Panc1 (cell line): ENCODE measurements at regions of chr17 and their contacts with region 1.

Region 1: DNA sequence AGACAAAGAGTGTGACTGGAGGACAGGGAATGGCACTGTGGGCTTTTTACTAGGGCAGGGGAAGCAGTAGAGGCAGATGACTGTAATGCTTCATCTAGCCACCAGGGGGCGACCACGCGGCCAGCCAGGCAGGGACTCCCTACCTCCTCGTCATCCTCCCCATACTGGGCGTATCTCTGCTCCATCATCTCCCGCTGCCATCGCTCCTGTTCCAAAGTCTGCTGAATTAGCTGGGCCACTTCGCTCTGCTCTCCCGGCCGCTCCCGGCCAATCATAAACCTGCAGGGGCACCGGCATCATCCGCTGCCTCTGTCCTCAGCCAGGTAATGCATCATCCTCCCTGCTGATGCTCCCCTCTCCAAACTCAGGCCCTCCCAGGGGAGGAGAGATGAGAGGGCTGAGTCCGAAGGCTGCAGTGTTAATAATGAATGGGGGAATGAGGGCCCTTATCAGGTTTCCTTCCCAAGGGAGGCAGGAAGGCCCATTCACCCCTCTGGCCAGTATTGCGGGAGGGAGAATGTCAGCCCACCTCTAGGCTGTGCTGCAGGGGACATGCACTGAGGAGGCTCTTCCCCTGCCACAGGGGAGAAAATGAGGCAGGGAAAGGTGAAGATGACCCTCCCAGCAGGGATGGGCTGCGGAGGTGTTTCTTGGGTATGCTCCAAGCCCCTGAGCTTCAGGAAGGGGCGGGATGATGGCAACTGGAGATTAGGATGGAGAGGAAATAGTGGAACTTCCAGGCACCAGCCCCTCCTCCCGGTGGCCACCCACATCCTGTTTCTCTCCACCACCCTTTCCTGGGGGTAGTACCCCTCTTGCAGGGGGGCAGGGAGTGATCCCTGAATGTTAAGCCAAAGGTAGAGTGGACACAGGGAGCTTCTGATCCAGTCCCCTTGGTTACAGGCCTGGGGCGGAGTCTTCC is 10.3 kb upstream of the SAMD14 start:
- DNase-seq: no peak
- ATAC-seq: peak; percentile 89
- H3K4me3 ChIP-seq: no peak overlapping the region
- H3K27ac ChIP-seq: no peak overlapping the region; the same call in 1 of the 2 replicates
- H3K4me1 ChIP-seq: peaks cover 6% of the 10 kb centered on the region; the same call in 1 of the 2 replicates
- H3K27me3 ChIP-seq: no peaks in the 10 kb centered on the region
- CTCF ChIP-seq: peak; percentile 98

Region 2: DNA sequence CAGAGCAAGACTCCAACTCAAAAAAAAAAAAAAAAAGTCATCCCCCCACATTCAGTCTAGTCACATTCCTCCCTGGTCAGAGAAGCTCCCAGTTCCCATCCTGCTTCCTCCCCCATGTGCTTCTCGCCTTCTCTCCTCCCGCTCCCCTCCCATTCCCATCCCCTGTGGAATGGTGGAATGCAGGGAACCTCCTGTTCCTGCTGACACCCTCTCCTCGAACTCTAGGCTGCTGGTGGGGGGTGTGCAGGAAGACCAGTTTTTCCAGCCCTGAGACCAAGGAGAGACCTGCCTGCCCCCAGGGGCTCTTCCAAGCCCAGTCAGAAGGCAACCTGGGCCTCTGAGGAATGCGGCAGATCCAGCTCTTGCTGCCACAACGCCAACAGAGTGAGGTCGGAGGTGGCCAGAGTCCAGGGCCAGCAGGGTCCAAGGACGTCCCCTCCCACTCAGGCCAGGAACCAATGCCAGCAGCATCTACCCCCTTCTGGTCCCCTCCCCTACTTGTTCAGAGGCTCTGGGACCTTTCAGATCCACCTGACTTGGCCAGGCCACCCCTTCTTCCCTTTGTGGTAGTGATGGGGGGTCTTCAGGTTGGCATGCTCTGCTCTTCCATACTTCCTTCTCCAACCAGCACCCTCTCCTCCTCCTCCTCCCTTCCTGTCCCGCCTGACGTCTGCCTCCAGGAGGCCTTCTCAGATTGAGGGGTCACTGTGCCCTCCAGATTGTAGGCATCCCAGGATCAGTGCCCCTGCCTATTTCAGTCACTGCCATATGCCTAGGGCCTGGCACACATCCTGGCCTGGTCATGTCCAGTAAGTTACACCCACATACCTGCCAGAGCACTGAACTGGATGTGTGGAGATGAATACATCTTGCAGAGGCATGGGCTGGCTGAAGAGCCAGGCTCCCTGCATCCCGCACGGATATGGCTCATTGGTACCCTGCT is 252.9 kb before region 1 on chr17:
- CTCF ChIA-PET with region 1: no interaction called
- POLR2A ChIA-PET with region 1: no interaction called
- in situ Hi-C with region 1: no loop called
- intact Hi-C with region 1: no loop called
- DNase-seq: no peak
- ATAC-seq: no peak
- H3K4me3 ChIP-seq: no peak overlapping the region
- H3K27ac ChIP-seq: no peak overlapping the region
- H3K4me1 ChIP-seq: no peaks in the 10 kb centered on the region
- H3K27me3 ChIP-seq: no peaks in the 10 kb centered on the region
- CTCF ChIP-seq: no peak

Region 3: GRCh38 chr17:50026901-50027630 is 113.1 kb before region 1 on chr17:
- CTCF ChIA-PET with region 1: no interaction called
- POLR2A ChIA-PET with region 1: interaction called, 15 read pairs
- in situ Hi-C with region 1: no loop called
- intact Hi-C with region 1: no loop called
- DNase-seq: no peak
- ATAC-seq: peak; percentile 64
- H3K4me3 ChIP-seq: peak overlapping the region; percentile 33 to 56
- H3K27ac ChIP-seq: peak overlapping the region; percentile 91
- H3K4me1 ChIP-seq: peaks cover 34% of the 10 kb centered on the region
- H3K27me3 ChIP-seq: no peaks in the 10 kb centered on the region
- CTCF ChIP-seq: peak; percentile 96

Region 4: DNA sequence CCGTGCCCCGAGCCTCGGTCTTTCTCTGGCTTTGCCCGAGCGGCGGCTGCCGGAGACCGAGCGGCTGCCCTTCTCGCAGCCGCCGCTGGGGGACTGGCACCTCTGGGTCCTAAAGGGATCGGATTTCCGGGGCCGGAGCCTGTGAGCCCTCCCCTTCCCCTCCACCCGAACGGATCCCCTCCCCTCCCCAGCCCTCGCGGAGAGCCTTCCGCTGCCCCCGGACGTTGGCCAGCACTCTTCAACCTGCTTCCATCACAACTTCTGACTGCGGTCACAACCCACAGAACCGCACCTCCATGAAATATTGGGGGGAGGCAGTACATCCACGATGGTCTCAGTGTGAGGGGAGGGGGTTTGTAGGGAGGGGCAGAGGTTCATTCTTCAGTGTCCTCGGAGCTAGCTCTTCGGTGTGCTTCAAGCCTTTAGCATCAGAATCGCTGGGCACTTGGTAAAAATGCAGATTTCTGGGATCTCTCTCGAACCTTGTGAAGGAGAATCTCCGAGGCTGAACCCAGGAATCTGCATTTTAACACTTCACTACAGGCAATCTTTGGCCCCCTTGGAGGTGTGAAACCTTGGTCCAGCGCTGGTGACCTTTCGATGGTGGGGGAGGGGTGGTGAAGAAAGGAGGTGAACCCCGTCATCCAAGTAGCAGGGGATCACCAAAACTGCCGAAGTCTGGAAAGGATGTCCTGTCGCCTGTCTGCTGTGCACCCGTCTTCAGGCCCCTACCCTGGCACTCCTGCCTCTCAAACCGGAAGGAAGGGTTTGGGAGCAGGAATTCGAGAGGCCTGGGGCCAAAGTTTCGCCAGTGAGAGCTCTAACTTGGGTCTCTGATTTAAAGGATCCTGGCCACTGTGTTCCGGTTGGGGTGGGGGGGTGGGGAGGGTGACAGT is 11.1 kb after region 1 on chr17:
- CTCF ChIA-PET with region 1: no interaction called
- POLR2A ChIA-PET with region 1: interaction called, 12 read pairs
- in situ Hi-C with region 1: no loop called
- intact Hi-C with region 1: no loop called
- DNase-seq: peak; percentile 67
- ATAC-seq: peak; percentile 76
- H3K4me3 ChIP-seq: peak overlapping the region; percentile 70 to 97
- H3K27ac ChIP-seq: peak overlapping the region; percentile 100
- H3K4me1 ChIP-seq: peaks cover 58% of the 10 kb centered on the region
- H3K27me3 ChIP-seq: no peaks in the 10 kb centered on the region
- CTCF ChIP-seq: no peak; the same call in 1 of the 2 replicates

Region 5: DNA sequence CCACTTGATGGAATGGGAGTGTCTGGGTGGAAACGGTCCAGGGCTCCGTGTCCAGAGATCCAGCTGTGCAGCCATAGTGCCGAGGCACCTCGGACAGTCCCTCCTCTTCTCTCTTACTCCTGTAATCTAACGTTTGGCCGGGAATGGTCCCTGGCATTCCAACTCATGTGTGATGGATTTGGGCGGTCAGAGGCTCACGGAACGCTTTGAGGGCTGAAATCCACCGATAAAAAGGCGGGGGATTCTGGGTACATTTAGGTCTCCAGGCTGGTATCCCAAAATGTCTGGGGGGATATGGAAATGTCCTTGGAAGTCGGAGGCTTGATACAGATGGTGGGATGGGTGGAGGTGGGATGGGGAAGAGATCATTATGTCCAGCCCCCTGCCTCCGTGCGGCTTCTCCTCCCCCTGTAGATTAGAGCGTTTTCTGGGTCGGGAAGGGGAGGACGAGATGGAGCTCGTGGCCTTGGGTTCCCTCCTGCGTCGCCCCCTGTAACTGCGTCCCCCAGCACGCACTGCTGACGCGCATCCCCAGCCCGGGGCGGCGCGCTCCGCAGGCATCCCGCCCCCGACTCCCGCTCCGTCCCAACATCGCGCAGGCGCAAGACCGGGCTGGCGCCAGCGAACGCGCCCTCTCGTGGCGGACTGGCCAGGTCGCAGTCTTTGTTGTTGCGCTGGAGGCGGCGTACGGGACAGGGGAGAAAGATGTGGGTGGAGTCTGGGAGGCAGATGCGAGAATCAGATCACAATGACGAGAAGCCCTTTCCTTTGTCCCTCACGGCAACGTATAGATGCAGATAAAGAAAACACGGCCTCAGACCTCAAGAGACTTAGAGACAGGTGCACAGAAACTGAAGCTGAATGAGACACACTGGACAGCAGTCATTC is 21.1 kb after region 1 on chr17:
- CTCF ChIA-PET with region 1: interaction called, 3 read pairs
- POLR2A ChIA-PET with region 1: no interaction called
- in situ Hi-C with region 1: no loop called
- intact Hi-C with region 1: loop called (anchors 1 kb)
- DNase-seq: peak; percentile 64
- ATAC-seq: peak; percentile 97
- H3K4me3 ChIP-seq: peak overlapping the region; percentile 65 to 91
- H3K27ac ChIP-seq: peak overlapping the region; percentile 85
- H3K4me1 ChIP-seq: peaks cover 3% of the 10 kb centered on the region; the same call in 1 of the 2 replicates
- H3K27me3 ChIP-seq: no peaks in the 10 kb centered on the region
- CTCF ChIP-seq: peak; percentile 99